PC-3 (cell line): ENCODE measurements at regions of chr22 and their contacts with region 1.

Region 1: DNA sequence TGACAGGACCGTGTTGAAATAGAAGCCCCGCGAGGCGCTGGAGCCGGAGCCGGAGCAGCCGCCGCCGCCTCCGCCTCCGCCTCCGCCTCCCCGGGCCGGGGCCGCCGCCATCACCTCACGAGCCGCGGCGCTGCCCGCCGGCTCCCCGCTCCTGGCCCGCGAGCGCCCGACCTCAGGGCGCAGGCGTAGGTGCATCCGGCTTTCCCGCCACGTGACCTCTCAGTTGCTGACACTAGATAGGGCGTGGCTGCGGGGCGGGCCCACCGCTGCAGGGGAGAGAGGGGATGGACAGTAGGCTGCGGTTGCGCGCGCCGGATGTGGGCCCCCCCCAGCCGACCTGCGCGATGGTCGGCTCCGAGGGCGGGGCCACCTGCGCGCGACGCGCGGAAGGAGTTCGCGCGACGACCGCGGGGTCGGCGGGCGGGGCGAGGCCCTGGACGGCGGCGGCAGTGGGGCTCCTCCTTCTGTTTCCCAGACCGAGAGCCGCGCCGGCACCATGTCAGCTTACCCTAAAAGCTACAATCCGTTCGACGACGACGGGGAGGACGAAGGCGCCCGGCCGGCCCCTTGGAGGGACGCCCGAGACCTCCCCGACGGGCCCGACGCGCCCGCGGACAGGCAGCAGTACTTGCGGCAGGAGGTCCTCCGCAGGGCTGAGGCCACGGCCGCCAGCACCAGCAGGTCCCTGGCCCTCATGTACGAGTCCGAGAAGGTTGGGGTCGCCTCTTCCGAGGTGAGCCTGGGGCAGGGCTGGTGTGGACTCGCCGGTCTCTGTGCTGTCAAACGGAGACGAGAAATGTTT is at the starts of genes PI4KA and SNAP29:
- DNase-seq: peak; percentile 94
- ATAC-seq: peak; percentile 91
- H3K4me3 ChIP-seq: peak within 1 kb of the TSS; percentile 91
- H3K27ac ChIP-seq: peak within 1 kb of the TSS; percentile 41
- H3K4me1 ChIP-seq: peaks cover 18% of the 10 kb centered on the region
- H3K27me3 ChIP-seq: no peaks in the 10 kb centered on the region
- CTCF ChIP-seq: no peak
- total RNA-seq, gene PI4KA: 39.7 and 61.5 TPM in 2 replicates
- total RNA-seq, gene SNAP29: 12.3 and 23.9 TPM in 2 replicates

Region 2: GRCh38 chr22:20803696-20804324 is 55.0 kb before region 1 on chr22:
- CTCF ChIA-PET with region 1: no interaction called
- POLR2A ChIA-PET with region 1: no interaction called
- intact Hi-C with region 1: loop called (anchors 10 kb)
- DNase-seq: peak; percentile 35
- ATAC-seq: peak; percentile 50; the same call in 1 of the 2 replicates
- H3K4me3 ChIP-seq: no peak overlapping the region
- H3K27ac ChIP-seq: no peak overlapping the region
- H3K4me1 ChIP-seq: peaks cover 21% of the 10 kb centered on the region
- H3K27me3 ChIP-seq: no peaks in the 10 kb centered on the region
- CTCF ChIP-seq: peak; percentile 69

Region 3: DNA sequence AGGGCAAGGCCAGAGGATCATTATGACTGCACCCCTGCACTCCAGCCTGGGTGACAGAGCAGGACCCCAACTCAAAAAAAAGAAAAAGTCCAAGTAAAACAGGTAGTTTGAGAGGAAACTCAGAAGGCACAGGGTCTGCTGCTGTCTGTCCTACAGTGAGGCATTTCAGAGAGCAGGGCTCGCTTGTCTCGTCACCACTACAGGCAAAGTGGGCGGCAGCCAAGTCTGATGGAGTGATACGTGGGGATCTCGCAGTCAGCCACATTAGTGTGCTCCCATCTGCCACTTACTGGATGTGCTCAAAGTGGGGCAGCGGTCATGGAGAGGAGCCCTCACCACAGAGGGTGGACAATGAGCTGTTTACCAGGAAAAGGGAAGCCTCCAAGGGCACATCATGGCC is 42.3 kb before region 1 on chr22:
- CTCF ChIA-PET with region 1: no interaction called
- POLR2A ChIA-PET with region 1: no interaction called
- intact Hi-C with region 1: no loop called
- DNase-seq: no peak
- ATAC-seq: no peak
- H3K4me3 ChIP-seq: no peak overlapping the region
- H3K27ac ChIP-seq: no peak overlapping the region
- H3K4me1 ChIP-seq: no peaks in the 10 kb centered on the region
- H3K27me3 ChIP-seq: no peaks in the 10 kb centered on the region
- CTCF ChIP-seq: no peak

Region 4: DNA sequence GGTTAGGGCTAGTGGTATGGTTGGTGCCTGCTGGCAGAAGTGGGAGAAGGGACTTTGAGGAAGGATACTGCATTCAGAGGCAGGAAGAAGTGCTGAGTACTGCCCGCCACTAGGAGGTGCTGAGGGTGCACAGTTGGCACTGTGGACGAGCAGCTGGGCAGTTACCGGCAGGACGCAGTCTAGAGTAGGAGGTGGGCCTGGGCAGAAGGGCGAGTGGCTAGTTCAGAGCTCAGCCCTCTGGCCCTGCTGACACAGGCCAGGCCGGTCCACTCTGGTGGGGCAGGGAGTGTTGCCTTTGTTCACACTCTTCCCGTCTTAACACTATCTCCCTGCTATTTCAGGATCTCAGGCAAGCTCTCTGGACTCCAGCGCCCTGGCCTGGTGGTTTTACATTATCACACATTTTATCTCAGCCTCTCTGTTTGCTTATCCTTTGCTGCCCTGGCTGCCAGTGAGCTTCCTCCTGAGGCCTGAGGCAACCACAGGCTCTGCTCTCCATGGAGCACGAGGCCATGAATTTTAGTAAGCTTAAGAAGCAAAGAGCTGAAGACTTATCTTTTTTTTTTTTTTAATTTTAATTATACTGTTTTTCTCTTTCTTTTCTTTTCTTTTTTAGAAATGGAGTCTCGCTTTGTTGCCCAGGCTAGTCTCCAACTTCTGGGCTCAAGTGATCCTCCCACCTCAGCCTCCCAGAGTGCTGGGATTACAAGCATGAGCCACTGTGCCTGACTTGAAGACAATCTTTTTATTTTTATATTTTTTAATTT is 26.9 kb after region 1 on chr22:
- CTCF ChIA-PET with region 1: no interaction called
- POLR2A ChIA-PET with region 1: no interaction called
- intact Hi-C with region 1: no loop called
- DNase-seq: peak; percentile 78
- ATAC-seq: peak; percentile 96
- H3K4me3 ChIP-seq: no peak overlapping the region
- H3K27ac ChIP-seq: peak overlapping the region; percentile 31; the same call in 1 of the 2 replicates
- H3K4me1 ChIP-seq: peaks cover 13% of the 10 kb centered on the region
- H3K27me3 ChIP-seq: no peaks in the 10 kb centered on the region
- CTCF ChIP-seq: peak; percentile 91